ENCODE measurements at regions of chr1 and their contacts with region 1.

Region 1: GRCh38 chr1:99170516-99170915 is 93.8 kb upstream of the PLPPR4 start:
- DNase-seq: peak; percentile 84
- ATAC-seq: peak; percentile 90
- H3K4me3 ChIP-seq: no peak overlapping the region
- H3K27ac ChIP-seq: peak overlapping the region; percentile 35; the same call in 1 of the 2 replicates
- H3K4me1 ChIP-seq: peaks cover 32% of the 10 kb centered on the region
- H3K27me3 ChIP-seq: no peaks in the 10 kb centered on the region
- CTCF ChIP-seq: no peak

Region 2: GRCh38 chr1:99010679-99011078 is 159.8 kb before region 1 on chr1:
- CTCF ChIA-PET with region 1: interaction called, 3 read pairs
- POLR2A ChIA-PET with region 1: no interaction called
- intact Hi-C with region 1: loop called (anchors 5 kb)
- DNase-seq: no peak
- ATAC-seq: no peak
- H3K4me3 ChIP-seq: no peak overlapping the region
- H3K27ac ChIP-seq: peak overlapping the region; percentile 26
- H3K4me1 ChIP-seq: peaks cover 14% of the 10 kb centered on the region
- H3K27me3 ChIP-seq: no peaks in the 10 kb centered on the region
- CTCF ChIP-seq: no peak

Region 3: DNA sequence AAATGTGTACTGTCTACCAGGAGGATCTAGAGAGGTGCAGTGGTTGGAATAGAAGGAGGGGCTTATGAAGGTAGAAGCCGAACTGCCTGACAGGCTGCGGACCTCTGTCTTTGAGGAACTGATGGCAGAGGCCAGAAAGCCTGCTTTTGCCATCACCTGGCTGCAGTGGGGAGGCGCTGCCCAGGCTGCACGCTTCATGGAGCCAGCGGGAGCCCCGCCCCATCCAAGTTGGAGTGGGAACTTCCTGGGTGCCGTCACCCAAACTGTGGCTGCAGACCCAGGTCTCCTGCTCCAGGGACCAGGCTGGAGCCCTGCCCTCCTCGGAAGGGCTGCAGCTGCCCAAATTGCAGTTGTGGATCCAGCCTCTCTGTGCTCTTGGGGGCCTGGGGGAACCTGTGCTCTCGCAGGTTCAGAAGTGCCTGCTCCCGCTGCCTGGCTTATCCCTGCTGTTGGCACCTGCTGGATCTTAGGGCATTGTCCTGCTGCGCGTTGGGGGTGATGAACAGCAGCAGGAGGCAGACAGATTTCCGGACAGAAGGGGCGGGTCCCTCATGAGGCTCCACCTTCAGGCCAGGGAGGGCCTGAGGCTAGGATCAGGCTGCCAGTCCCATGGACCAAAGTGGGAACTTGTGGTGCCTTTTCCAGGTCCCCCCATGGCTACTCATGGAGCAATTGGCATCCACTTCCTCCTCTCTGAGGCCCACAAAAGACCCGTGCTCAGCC is 24.2 kb before region 1 on chr1:
- CTCF ChIA-PET with region 1: no interaction called
- POLR2A ChIA-PET with region 1: no interaction called
- intact Hi-C with region 1: no loop called
- DNase-seq: no peak
- ATAC-seq: peak; percentile 66
- H3K4me3 ChIP-seq: no peak overlapping the region
- H3K27ac ChIP-seq: no peak overlapping the region
- H3K4me1 ChIP-seq: no peaks in the 10 kb centered on the region
- H3K27me3 ChIP-seq: no peaks in the 10 kb centered on the region
- CTCF ChIP-seq: no peak

Region 4: GRCh38 chr1:99218999-99219398 is 48.5 kb after region 1 on chr1:
- CTCF ChIA-PET with region 1: no interaction called
- POLR2A ChIA-PET with region 1: no interaction called
- intact Hi-C with region 1: no loop called
- DNase-seq: no peak
- ATAC-seq: no peak
- H3K4me3 ChIP-seq: no peak overlapping the region
- H3K27ac ChIP-seq: no peak overlapping the region
- H3K4me1 ChIP-seq: no peaks in the 10 kb centered on the region
- H3K27me3 ChIP-seq: no peaks in the 10 kb centered on the region
- CTCF ChIP-seq: no peak

Measured in PC-3 (cell line).